HEK293T (cell line): ENCODE measurements at regions of chr17 and their contacts with region 1.

Region 1: DNA sequence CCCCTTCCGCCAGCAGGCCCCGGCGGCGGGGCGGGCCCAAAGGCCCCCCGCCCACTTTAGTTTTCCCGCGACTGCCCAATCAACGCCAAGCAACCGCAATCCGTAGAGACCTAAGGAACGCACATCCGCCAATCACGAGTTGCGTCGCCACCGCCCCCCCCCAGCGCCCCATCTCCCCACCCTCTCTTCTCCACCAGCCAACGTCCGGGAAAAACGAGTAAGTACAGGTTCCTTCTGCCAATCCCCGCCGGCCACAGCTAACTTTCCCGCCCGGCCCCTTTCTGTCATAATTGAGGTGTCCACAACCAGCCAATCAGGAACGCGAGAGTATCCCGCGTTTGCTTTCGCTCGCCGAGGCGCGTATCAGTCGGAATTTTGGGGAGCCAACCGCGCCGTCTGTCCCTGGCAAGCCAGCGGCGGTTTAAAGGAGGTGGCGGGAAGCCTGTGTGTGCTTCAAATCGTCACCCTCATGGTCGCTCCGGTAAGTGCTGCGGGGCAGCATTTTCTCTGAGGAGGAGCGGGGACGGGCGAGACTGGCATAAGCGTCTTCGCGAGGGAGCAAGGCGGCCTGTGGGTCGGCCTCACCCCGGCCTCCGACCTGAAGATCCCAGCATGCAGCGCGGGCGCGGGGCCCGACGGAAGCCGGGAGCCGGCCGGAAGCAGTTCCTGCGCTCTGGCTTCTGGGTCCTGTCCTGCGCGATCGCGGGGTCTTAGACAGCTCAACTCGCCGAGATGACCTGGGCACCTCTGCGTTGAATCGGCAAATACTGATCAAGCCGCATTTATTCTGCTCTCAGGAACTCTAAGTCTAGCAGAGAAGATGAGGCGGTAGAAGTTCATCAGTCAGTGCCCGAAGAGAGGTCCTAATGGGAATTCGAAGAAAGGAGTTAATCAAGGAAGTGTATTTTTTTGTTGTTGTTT is at the start of gene MIS12:
- DNase-seq: peak; percentile 97

Region 2: GRCh38 chr17:5438716-5439445 is 47.6 kb before region 1 on chr17 and contains the start of gene C1QBP:
- CTCF ChIA-PET with region 1: interaction called, 5 read pairs
- POLR2A ChIA-PET with region 1: interaction called, 10 read pairs
- DNase-seq: peak; percentile 94

Region 3: GRCh38 chr17:5468075-5468473 is 18.4 kb before region 1 on chr17:
- CTCF ChIA-PET with region 1: no interaction called
- POLR2A ChIA-PET with region 1: interaction called, 71 read pairs
- DNase-seq: peak; percentile 17

Region 4: GRCh38 chr17:5500589-5501391 is 14.3 kb after region 1 on chr17:
- CTCF ChIA-PET with region 1: interaction called, 6 read pairs
- POLR2A ChIA-PET with region 1: interaction called, 44 read pairs
- DNase-seq: peak; percentile 97

Region 5: DNA sequence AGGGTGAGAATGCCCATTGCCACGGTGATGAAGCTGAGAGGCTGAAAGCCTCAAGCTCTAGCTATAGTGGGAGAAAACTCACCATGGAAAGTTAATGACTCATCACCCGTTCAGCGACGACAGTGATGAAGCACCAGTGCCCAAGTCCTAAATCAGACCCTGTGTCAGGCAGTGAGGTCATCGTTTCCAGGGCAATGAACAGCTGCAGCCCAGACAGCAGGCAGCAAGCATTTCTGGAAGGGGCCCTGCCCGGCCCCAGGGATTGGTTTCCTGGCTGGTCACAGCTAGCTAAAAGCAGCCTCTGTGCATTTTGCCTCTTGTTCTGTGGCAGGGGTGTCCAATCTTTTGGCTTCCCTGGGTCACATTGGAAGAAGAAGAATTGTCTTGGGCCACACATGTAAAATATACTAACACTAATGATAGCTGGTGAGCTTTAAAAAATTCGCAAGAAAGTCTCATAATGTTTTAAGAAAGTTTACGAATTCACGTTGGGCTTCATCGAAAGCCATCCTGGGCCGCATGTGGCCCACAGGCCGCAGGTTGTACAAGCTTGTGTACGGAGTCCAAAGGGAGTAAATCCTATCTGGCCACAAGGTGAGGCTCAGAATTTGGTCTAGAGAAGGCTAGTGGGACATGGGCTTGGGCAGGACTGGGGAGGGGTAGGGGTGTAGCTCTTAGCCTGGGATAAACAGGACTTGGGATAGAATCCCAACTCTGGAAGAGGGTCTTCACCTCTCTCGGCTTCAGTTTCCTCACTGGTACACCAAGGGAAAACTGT is 40.5 kb after region 1 on chr17:
- CTCF ChIA-PET with region 1: no interaction called
- POLR2A ChIA-PET with region 1: interaction called, 11 read pairs
- DNase-seq: peak; percentile 77